ENCODE measurements at regions of chr1 and their contacts with region 1.

Region 1: DNA sequence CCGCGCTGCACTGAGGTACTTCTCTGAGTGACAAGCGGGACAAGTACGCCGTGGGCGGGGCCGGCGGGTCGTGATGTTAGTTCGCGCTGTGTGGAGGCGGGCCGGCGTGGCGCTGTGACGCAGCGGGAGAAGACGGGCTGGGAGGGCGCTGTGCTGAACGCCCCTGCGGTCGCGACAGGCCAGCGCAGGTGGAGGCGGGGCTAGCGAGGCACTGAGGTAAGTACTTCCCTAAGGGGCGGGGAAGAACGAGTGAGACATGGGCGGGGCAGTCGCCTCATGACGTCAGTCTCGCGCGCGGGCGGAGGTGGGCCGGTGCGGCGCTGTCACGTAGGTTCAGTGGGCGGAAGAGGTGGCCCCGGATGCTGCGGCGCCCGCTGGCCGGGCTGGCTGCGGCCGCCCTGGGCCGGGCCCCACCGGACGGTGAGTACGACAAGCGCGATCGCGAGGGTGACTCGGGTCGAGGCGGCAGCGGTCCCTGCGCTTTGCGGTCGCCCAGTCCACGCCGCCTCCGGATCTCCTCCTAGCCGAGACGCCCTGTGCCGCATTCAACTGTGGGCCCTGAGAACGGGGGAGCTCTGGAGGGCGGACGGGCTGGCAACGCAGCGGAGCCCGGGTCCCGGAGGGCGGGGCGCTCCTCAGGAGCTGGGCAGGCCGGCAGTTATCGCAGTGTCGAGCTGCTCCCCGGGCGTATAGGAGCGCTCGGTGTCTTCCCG is at the start of gene GUK1:
- DNase-seq: peak; percentile 100
- total RNA-seq, gene GUK1: 213 TPM

Region 2: GRCh38 chr1:228082135-228082891 is 57.8 kb before region 1 on chr1 and contains the start of gene ARF1:
- intact Hi-C with region 1: loop called (anchors 2 kb)
- DNase-seq: peak; percentile 97
- total RNA-seq, gene ARF1: 332 TPM

Region 3: DNA sequence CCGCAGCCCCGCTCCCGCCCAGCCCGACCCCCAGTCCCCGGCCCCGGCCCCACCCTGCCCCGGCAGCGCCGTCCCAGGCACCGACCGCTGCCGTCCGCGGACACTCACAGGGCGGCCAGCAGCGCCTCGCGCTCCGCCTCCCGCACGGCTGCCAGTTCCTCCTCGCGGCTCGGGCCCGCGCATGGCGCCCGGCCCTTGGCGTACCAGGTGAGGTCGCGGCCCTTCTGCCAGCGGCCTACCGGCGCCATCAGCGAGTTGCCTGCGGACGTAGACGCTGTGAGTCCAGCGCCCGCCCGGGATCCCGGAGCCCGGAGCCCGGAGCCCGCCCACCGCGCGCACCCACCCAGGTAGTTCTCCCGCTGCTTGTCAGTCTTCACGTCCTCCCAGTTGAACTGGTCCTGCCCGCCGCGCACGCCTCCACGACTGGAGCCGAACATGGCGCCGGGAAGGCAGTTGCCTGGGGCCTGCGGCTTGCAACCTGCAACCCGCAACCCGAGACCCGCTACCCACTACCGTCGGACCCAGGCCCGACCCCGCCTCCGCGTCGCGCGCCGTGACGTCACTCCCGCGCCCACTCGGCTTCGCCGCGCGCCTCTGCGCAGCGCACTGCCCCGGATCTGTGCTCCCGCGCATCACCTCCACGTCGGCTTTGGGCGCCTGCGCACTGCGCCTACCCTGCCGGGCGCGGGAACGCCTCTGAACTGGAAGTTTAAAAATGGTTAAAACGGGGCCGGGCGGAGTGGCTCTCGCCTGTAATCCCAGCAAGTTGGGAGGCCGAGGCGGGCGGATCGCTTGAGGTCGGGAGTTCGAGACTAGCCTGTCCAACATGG is 37.1 kb before region 1 on chr1 and contains the start of gene C1orf35:
- intact Hi-C with region 1: loop called (anchors 5 kb)
- DNase-seq: peak; percentile 95
- total RNA-seq, gene C1orf35: 8.9 TPM

Region 4: DNA sequence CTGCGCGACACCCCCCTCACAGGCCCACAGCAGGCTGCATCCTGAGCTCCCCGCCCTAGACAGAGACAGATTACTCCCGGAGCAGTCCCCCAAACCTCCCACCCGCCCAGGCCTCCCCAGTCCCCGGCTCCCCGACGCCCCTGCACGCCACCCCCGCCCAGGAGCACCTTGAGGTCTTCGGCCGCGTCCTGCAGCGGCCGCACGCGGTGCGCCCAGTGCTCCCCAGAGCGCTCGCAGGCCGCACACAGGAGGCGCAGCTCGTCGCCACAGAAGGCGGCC is 265.8 kb after region 1 on chr1:
- intact Hi-C with region 1: loop called (anchors 5 kb)
- DNase-seq: no peak

Measured in cardiac septum (tissue), 1 donor.